Endothelial cell of umbilical vein (primary cell): ENCODE measurements at regions of chr7 and their contacts with region 1.

Region 1: DNA sequence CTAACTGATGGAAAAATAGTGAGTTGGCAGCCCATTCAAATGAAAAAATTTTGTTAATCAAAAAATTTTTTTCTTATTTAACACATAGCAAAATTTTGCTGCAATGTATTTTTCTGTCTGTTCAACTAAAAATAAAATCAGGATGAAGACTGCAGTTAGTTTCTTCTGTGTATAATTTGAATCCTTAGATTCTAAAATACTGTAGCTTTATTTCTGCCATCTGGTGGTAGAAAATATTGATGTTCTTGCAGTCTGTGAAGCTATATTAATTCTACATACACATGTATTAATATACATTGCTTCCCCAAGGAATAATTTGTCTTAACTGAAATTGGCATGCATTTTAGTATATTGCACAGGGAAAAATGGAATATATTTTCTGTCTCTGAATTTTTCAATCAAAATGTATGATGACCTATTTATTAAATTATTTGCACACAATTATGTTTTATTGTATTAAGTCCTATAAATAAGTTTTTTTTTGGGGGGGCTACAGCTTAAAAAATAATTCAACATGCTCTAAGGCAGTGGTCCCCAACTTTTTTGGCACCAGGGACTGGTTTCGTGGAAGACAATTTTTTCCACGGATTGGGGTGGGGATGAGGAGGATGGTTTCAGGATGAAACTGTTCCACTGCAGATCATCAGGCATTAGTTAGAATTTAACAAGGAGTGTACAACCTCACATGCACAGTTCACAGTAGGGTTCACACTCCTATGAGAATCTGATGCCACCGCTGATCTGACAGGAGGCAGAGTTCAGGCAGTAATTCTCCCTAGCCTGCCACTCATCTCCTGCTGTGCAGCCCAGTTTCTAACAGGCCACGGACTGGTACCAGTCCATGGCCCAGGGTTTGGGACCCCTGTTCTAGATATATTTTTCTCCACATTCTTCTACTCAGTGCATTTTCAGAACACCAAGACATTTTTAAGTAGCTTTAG is 119.4 kb downstream of the GNAT3 start:
- DNase-seq: peak; percentile 57
- H3K4me3 ChIP-seq: no peak overlapping the region
- H3K27ac ChIP-seq: no peak overlapping the region
- H3K4me1 ChIP-seq: no peaks in the 10 kb centered on the region
- H3K27me3 ChIP-seq: no peaks in the 10 kb centered on the region
- CTCF ChIP-seq: peak; percentile 7 to 8
- POLR2A ChIP-seq: no peak

Region 2: GRCh38 chr7:80095545-80095944 is 297.0 kb before region 1 on chr7:
- CTCF ChIA-PET with region 1: interaction called, 61 read pairs
- POLR2A ChIA-PET with region 1: no interaction called
- dilution Hi-C with region 1: no loop called
- intact Hi-C with region 1: loop called (anchors 1 kb)
- DNase-seq: peak; percentile 37
- H3K4me3 ChIP-seq: no peak overlapping the region
- H3K27ac ChIP-seq: no peak overlapping the region
- H3K4me1 ChIP-seq: no peaks in the 10 kb centered on the region
- H3K27me3 ChIP-seq: no peaks in the 10 kb centered on the region
- CTCF ChIP-seq: peak; percentile 8 to 29
- POLR2A ChIP-seq: no peak

Region 3: DNA sequence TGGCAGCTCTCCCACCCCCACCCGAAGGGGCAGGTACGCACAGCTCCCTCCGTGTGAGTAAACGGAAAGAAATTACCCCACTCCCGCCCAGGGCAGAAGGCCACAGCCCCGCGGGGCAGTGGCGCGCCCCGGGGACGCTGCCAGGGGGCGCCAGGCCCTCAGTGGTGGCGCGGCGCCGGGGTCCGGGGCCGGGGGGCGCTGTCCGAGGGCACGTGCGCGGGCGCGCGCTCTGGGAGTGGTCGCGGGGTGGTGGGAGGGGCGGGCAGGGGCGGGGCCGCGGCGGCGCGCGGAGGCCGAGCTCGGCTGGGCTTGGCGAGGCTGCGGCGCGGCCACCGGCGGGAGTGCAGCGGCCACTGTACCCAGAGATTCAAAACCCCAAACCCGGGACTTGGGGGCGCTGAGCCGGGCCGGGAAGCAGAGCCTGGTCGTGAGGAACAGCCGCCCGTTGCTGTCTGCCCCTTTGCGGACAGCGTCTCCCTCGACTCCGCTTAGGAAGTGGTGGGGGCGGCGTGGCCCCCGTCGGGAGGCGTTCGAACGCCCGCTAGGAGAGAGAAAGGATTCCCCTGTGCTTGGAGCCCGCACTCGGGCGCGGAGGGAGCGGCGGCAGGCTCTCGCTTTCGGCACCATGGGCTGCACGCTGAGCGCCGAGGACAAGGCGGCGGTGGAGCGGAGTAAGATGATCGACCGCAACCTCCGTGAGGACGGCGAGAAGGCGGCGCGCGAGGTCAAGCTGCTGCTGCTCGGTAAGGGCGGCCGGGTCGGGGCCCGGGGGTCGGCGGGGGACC is 257.8 kb before region 1 on chr7 and contains the start of gene GNAI1:
- CTCF ChIA-PET with region 1: interaction called, 96 read pairs
- POLR2A ChIA-PET with region 1: interaction called, 4 read pairs
- dilution Hi-C with region 1: no loop called
- intact Hi-C with region 1: loop called (anchors 1 kb)
- DNase-seq: peak; percentile 65
- H3K4me3 ChIP-seq: peak within 1 kb of the TSS; percentile 88 to 94 (median 91)
- H3K27ac ChIP-seq: peak within 1 kb of the TSS; percentile 54
- H3K4me1 ChIP-seq: peaks cover 17% of the 10 kb centered on the region
- H3K27me3 ChIP-seq: peaks cover 0 to 1% of the 10 kb centered on the region in 2 experiments
- CTCF ChIP-seq: peak; percentile 30 to 49
- POLR2A ChIP-seq: peak; percentile 70
- total RNA-seq, gene GNAI1: 15.0 and 19.7 TPM in 2 replicates

Region 4: GRCh38 chr7:80231707-80232106 is 160.8 kb before region 1 on chr7:
- CTCF ChIA-PET with region 1: interaction called, 10 read pairs
- POLR2A ChIA-PET with region 1: no interaction called
- dilution Hi-C with region 1: no loop called
- intact Hi-C with region 1: no loop called
- DNase-seq: no peak
- H3K4me3 ChIP-seq: no peak overlapping the region
- H3K27ac ChIP-seq: no peak overlapping the region
- H3K4me1 ChIP-seq: no peaks in the 10 kb centered on the region
- H3K27me3 ChIP-seq: no peaks in the 10 kb centered on the region
- CTCF ChIP-seq: no peak
- POLR2A ChIP-seq: no peak

Region 5: DNA sequence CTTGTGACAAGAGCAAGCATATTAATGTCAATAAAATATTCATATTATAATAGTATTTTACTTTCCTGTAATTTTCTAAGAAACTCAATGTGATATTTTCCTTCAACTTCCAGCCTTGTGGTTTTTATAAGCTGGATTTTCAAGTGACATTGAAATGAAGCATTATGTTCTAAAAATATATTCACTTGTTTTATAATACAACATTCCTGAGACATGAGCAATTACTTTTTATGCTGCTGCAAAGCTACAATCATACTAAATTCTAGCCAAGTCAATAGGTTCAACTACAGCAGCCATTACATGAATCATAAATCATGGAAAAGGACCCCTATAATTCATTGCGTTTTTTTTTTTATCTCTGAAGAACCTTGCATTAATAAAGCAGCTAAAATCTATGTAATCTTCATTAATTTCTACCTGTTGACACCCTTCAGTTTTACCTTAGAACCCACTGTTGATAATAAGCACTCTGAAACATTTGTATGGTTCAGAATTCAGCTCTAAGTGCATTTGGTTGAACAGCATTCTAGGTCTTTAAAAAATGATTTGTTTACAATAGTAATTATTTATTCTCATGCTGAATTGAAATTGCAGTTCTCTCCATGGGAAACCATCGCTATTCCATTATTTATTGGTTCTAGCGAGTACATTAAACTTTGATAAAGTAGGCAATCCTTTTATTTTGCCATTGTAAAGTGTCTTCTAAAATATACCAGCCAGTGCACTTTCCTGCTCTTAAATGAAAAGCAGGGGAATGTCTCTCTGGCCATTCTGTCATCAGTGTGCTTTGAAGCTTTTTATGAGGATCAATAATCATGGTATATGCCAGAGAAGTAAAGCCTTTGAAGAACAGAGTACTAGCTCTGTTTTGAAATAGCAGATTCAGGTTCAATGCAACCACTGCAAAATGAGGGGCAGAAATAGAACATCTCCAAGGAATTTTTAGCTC is 13.2 kb before region 1 on chr7:
- CTCF ChIA-PET with region 1: interaction called, 34 read pairs
- POLR2A ChIA-PET with region 1: no interaction called
- dilution Hi-C with region 1: no loop called
- intact Hi-C with region 1: no loop called
- DNase-seq: peak; percentile 78
- H3K4me3 ChIP-seq: no peak overlapping the region
- H3K27ac ChIP-seq: peak overlapping the region; percentile 7
- H3K4me1 ChIP-seq: peaks cover 12% of the 10 kb centered on the region
- H3K27me3 ChIP-seq: no peaks in the 10 kb centered on the region
- CTCF ChIP-seq: no peak
- POLR2A ChIP-seq: no peak

Region 6: DNA sequence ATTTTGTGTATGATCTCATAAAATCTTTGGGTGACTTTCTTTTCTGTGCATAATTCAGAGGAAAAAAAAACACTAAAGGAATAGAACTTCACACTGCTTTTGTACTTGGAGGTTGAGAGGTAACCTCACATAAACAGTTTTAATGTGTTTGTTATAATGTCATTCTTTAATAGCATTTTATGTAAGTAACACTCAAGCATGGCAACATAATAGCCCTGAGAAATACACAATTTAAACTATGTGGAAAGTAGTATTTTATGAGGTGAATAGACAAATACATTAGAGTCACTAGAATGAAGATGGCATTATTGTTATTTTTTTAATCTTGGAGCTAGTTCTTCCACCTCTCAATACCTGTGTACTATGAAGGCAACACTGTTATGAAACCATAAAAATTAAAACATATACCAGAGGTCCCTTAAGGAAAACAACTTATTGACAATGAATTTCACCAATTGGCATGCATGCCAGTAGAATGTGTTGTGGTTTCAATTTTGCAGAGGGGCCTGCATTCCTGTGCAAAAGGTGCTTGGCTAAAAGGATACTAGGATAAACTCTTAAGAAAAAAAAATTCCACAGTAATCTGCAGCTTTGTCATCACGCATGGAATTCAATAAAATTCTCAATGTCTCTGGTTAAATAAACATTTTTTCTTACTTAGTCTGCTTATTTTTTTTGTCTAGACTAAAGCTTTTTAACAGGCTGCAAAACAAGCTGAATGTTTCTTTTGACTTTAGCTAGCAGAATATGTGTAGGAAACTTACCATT is 348.5 kb after region 1 on chr7:
- CTCF ChIA-PET with region 1: no interaction called
- POLR2A ChIA-PET with region 1: no interaction called
- dilution Hi-C with region 1: no loop called
- intact Hi-C with region 1: no loop called
- DNase-seq: no peak
- H3K4me3 ChIP-seq: no peak overlapping the region
- H3K27ac ChIP-seq: no peak overlapping the region
- H3K4me1 ChIP-seq: no peaks in the 10 kb centered on the region
- H3K27me3 ChIP-seq: no peaks in the 10 kb centered on the region
- CTCF ChIP-seq: no peak
- POLR2A ChIP-seq: no peak